Posterior cingulate gyrus (tissue), 11 donors: ENCODE measurements at regions of chr12 and their contacts with region 1.

Region 1: GRCh38 chr12:45388545-45388944 is 172.7 kb downstream of the ANO6 start:
- DNase-seq: no peak

Region 2: GRCh38 chr12:44774815-44775411 is 613.6 kb before region 1 on chr12:
- intact Hi-C with region 1: no loop called
- DNase-seq: peak in 1 of 10 donors; percentile 43

Region 3: DNA sequence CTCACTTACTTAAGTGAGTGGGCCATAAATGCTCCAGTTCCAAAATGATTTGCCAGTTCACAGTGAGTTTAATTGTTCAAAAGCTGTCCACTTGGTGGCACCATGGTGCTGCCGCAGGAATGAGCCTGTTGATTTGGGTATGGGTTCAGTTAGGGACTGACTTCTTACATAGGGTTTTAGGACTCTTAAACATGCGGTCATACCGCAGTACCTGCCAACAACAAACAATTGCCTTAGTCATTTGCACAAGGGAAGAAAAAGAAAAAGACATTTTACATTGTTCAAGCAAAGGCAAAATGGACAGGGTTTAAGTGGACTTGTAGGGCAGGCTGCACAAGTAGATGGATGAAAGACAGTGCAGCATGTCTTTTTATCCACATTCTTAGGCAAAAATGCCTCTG is 257.7 kb before region 1 on chr12:
- intact Hi-C with region 1: loop called (anchors 5 kb)
- DNase-seq: peak in 8 of 10 donors; percentile 20 to 91 (median 50)

Region 4: DNA sequence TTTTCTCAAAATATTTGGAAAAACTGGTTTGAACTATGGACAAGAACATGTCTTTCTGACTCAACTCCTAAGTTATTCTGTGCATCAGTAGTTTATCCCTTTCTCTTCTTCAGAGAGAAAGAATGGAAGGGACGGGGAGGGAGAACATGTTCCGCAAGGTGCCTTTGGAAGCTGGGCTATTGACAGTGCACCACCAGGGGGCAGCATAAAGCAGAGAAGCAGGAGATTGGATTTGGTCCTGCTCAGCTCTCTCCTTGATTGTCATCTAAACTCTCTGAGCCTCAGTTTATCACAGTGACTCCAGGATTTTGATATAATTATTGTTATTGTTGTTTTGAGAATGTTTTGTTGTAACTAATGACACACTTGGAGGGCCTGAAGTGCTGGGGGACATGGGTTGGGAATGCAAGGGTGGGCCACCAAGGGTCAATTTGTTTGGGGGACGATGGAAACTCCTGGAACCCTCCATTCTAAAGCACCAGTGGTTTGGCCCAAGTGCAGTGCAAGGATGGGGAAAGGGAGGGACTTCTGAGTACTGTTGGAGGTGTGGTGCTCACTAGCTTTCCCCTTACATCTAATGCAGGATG is 218.0 kb before region 1 on chr12:
- intact Hi-C with region 1: loop called (anchors 5 kb)
- DNase-seq: peak in 9 of 10 donors; percentile 19 to 92 (median 70)